Thyroid gland (tissue), 4 donors: ENCODE measurements at regions of chr6 and their contacts with region 1.

Region 1: DNA sequence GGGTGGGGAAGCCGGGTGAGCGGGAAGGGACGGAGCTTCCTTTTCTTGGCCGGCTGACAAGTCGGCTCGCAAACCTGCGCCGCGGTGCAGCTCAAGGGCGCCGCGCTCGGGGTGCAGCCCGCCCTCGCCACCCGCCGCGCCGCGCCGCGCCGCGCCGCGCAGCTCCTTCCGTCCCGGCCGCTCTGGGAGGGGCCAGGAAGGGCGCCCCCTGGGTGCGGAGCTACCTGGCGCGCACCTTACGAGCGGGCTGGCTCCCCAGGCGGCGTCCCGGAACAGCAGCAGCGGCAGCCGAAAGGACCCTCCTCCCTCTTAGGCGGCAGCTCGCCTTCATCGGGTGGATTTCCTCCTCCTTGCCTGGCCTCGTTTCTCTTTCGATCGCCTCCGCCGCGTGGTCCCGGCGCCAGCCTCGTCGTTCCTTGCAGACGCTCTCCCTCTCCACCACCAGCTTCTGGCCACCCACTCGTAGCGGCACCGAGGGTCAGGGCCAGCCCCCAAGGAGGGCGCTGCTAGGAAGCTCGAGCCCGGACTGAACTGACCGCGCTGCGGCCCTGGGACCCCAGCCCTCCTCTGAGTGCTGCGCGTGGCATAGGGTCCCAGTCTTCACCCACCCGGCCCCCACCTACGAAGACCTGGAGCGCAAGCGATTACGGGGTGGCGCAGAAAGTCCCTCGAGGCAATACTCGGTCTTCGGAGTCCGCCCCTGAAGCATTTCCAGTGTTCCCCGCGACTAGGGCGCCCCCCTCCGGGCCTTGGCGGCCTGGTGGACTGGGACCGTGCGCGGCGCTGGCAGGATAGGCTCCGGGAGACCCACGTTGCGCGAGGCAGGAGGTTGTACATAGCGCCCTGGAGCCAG is at the start of gene MAP3K5:
- DNase-seq: peak; percentile 93 to 96
- H3K4me3 ChIP-seq: peak within 1 kb of the TSS; percentile 80 to 93 (median 83)
- H3K27ac ChIP-seq: peak within 1 kb of the TSS; percentile 97 to 100 (median 98)
- H3K4me1 ChIP-seq: peaks cover 19 to 29% of the 10 kb centered on the region in 2 donors
- H3K27me3 ChIP-seq: no peaks in the 10 kb centered on the region
- CTCF ChIP-seq: peak; percentile 25 to 92 (median 73)
- POLR2A ChIP-seq: peak in 1 of 2 donors; percentile 84
- total RNA-seq, gene MAP3K5: 28.1 to 68.0 (median 46.5) TPM

Region 2: GRCh38 chr6:136643850-136644596 is 148.6 kb before region 1 on chr6:
- intact Hi-C with region 1: loop called (anchors 2 kb)
- DNase-seq: peak; percentile 95 to 98
- H3K4me3 ChIP-seq: no peak overlapping the region
- H3K27ac ChIP-seq: peak overlapping the region; percentile 33 to 83 (median 66)
- H3K4me1 ChIP-seq: peaks cover 24 to 47% of the 10 kb centered on the region in 2 donors
- H3K27me3 ChIP-seq: no peaks in the 10 kb centered on the region
- CTCF ChIP-seq: peak; percentile 66 to 97 (median 90)
- POLR2A ChIP-seq: no peak

Region 3: DNA sequence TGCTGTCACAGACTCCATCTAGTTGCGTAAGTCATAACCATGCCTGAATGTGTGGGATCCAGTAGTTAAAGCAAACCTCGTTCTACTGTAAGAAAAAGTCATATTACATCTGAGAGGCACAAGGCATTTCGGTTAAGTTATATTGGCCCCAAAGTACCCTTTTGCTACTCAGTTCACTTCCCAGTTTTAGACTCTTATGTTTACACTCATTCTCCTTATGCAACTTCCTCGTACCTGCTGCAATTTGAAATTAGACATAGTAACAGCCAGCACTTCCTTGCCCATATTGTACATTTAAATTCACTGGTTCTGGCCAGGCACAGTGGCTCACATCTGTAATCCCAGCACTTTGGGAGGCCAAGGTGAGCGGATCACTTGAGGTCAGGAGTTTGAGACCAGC is 66.8 kb after region 1 on chr6:
- intact Hi-C with region 1: no loop called
- DNase-seq: no peak
- H3K4me3 ChIP-seq: no peak overlapping the region
- H3K27ac ChIP-seq: no peak overlapping the region
- H3K4me1 ChIP-seq: no peaks in the 10 kb centered on the region
- H3K27me3 ChIP-seq: no peaks in the 10 kb centered on the region
- CTCF ChIP-seq: no peak
- POLR2A ChIP-seq: no peak